ENCODE measurements at regions of chr14 and their contacts with region 1.

Region 1: GRCh38 chr14:45426670-45427282 is 173.8 kb upstream of the MIS18BP1 start:
- DNase-seq: no peak
- ATAC-seq: peak in 2 of 8 donors; percentile 47 to 51
- H3K4me3 ChIP-seq: no peak overlapping the region
- H3K27ac ChIP-seq: no peak overlapping the region
- H3K4me1 ChIP-seq: peaks cover 0 to 5% (median 0%) of the 10 kb centered on the region in 9 donors
- H3K27me3 ChIP-seq: no peaks in the 10 kb centered on the region
- CTCF ChIP-seq: peak; percentile 39 to 74 (median 67)

Region 2: DNA sequence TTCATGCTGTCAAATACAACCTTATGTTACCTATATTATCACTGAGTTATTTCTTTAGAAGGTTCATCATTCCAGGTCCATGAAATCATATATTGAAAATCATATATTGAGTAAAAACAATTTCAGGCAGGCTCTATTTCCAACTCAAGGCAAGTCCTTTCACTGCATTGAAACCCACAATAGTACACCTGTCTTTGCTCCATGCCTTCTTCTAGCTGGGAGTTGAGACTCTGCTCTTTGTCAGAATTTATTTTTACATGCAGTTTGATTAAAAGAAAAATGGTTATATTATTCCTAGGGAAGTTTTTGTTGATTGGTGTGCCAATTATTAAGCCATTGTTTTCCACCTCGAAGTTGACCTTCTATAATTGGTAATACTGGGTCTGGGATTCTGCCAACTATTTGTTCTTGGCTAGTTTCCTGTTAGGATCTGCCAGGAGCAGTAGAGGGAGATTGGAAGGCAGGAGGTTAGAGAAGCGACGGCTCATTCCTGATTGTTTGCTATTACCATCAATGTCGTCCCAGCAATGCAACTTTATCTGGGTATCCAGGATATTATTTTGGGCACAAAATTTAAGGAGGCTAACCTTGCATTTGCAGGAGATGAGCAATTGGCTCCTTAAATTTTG is 94.3 kb before region 1 on chr14:
- intact Hi-C with region 1: no loop called
- DNase-seq: peak in 1 of 2 donors; percentile 27
- ATAC-seq: peak in 7 of 8 donors; percentile 52 to 88 (median 81)
- H3K4me3 ChIP-seq: no peak overlapping the region
- H3K27ac ChIP-seq: peak overlapping the region in 1 of 10 donors; percentile 45
- H3K4me1 ChIP-seq: peaks cover 0 to 15% (median 6%) of the 10 kb centered on the region in 9 donors
- H3K27me3 ChIP-seq: no peaks in the 10 kb centered on the region
- CTCF ChIP-seq: no peak

Region 3: GRCh38 chr14:45467023-45467422 is 40.2 kb after region 1 on chr14:
- intact Hi-C with region 1: no loop called
- DNase-seq: no peak
- ATAC-seq: peak in 4 of 8 donors; percentile 57 to 68 (median 60)
- H3K4me3 ChIP-seq: no peak overlapping the region
- H3K27ac ChIP-seq: no peak overlapping the region
- H3K4me1 ChIP-seq: no peaks in the 10 kb centered on the region
- H3K27me3 ChIP-seq: no peaks in the 10 kb centered on the region
- CTCF ChIP-seq: no peak

Region 4: GRCh38 chr14:45526715-45527549 is 100.2 kb after region 1 on chr14:
- intact Hi-C with region 1: loop called in 9 of 10 experiments (anchors 1 to 10 kb)
- DNase-seq: peak in 1 of 2 donors; percentile 9
- ATAC-seq: peak in 6 of 8 donors; percentile 38 to 75 (median 59)
- H3K4me3 ChIP-seq: no peak overlapping the region
- H3K27ac ChIP-seq: no peak overlapping the region
- H3K4me1 ChIP-seq: no peaks in the 10 kb centered on the region
- H3K27me3 ChIP-seq: no peaks in the 10 kb centered on the region
- CTCF ChIP-seq: peak in 8 of 9 donors; percentile 12 to 59 (median 48)